IMR-90 (cell line): ENCODE measurements at regions of chr7 and their contacts with region 1.

Region 1: DNA sequence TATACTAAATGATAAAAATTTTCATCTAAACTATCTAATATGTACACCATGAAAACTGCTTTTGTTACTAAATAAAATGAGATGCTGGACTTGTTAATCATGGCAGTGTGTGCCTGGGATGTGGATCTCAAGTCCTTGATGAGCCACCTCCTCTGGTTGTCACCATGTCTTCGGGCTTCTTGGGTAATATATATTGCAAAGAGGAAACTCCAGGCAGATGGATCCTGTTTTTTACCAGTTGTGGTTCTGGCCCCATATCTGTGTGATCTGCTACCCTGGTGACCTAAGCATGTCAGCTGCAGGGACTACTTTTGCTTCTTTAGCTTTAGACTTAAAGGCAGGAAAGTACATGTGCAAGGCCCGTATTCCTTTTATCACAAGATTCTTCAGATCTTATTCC is 46.2 kb downstream of the TMEM60 start:
- DNase-seq: no peak
- ATAC-seq: no peak
- H3K4me3 ChIP-seq: no peak overlapping the region
- H3K27ac ChIP-seq: no peak overlapping the region
- H3K4me1 ChIP-seq: peaks cover 2% of the 10 kb centered on the region; the same call in 1 of the 2 replicates
- H3K27me3 ChIP-seq: no peaks in the 10 kb centered on the region
- CTCF ChIP-seq: no peak
- POLR2A ChIP-seq: no peak
- RAD21 ChIP-seq: no peak

Region 2: GRCh38 chr7:77415823-77416622 is 336.0 kb before region 1 on chr7 and contains the start of gene GSAP:
- CTCF ChIA-PET with region 1: no interaction called
- POLR2A ChIA-PET with region 1: interaction called, 15 read pairs
- dilution Hi-C with region 1: no loop called
- in situ Hi-C with region 1: no loop called
- intact Hi-C with region 1: no loop called
- DNase-seq: no peak
- ATAC-seq: peak; percentile 84
- H3K4me3 ChIP-seq: peak within 1 kb of the TSS; percentile 72
- H3K27ac ChIP-seq: peak within 1 kb of the TSS; percentile 36; the same call in 1 of the 2 replicates
- H3K4me1 ChIP-seq: peaks cover 3% of the 10 kb centered on the region
- H3K27me3 ChIP-seq: no peaks in the 10 kb centered on the region
- CTCF ChIP-seq: no peak
- POLR2A ChIP-seq: no peak
- RAD21 ChIP-seq: no peak
- total RNA-seq, gene GSAP: 1.8 and 1.9 TPM in 2 replicates

Region 3: GRCh38 chr7:77657427-77658224 is 94.4 kb before region 1 on chr7:
- CTCF ChIA-PET with region 1: interaction called, 5 read pairs
- POLR2A ChIA-PET with region 1: no interaction called
- dilution Hi-C with region 1: no loop called
- in situ Hi-C with region 1: loop called (anchors 5 kb)
- intact Hi-C with region 1: no loop called
- DNase-seq: peak; percentile 43
- ATAC-seq: peak; percentile 71
- H3K4me3 ChIP-seq: no peak overlapping the region
- H3K27ac ChIP-seq: no peak overlapping the region
- H3K4me1 ChIP-seq: peaks cover 1% of the 10 kb centered on the region; the same call in 1 of the 2 replicates
- H3K27me3 ChIP-seq: no peaks in the 10 kb centered on the region
- CTCF ChIP-seq: peak; percentile 60
- POLR2A ChIP-seq: no peak
- RAD21 ChIP-seq: peak; percentile 67